T-cell (primary cell): ENCODE measurements at regions of chrX and their contacts with region 1.

Region 1: DNA sequence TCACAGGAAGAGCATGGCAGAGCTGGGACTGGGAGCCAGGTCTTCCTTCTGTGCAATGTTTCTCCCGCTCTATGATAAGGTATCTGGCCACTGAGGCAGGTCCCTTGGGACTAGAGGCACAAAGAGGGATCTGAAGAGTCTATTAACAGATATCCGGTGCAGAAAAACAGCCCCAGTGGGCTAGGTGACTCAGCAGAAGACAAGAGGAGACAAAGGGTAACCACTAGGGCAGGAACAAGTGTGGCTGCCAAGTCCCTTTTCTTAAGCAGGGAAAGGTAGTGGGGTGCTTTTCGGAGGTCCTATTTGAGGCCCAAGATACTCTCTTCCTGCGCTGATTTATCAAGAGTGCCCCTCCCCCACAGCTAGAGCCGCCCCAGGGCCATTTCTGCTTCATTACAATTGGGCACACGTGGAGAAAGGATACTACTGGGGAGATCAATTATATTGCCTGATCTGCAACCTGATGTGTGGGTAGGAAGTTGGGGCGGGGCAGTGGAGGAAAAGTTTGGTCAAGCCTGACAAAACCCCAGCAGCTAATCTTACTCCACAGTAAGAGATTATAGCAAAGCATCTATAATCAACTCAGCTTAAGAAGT is at the start of gene DGAT2L6:
- DNase-seq: no peak
- ATAC-seq: no peak
- H3K4me3 ChIP-seq: no peak within 1 kb of the TSS
- H3K4me3 Mint-ChIP-seq: no peak within 1 kb of the TSS
- H3K27ac ChIP-seq: no peak within 1 kb of the TSS
- H3K27ac Mint-ChIP-seq: no peak within 1 kb of the TSS
- H3K4me1 ChIP-seq: no peaks in the 10 kb centered on the region
- H3K4me1 Mint-ChIP-seq: no peaks in the 10 kb centered on the region
- H3K27me3 ChIP-seq: no peaks in the 10 kb centered on the region
- H3K27me3 Mint-ChIP-seq: peaks cover 0 to 9% of the 10 kb centered on the region in 2 donors
- total RNA-seq, gene DGAT2L6: not detected

Region 2: GRCh38 chrX:69412661-69413060 is 764.4 kb before region 1 on chrX:
- CTCF ChIA-PET with region 1: interaction called in 1 of 2 experiments, 18 read pairs
- POLR2A ChIA-PET with region 1: no interaction called
- DNase-seq: no peak
- ATAC-seq: no peak
- H3K4me3 ChIP-seq: no peak overlapping the region
- H3K4me3 Mint-ChIP-seq: no peak overlapping the region
- H3K27ac ChIP-seq: no peak overlapping the region
- H3K27ac Mint-ChIP-seq: no peak overlapping the region
- H3K4me1 ChIP-seq: no peaks in the 10 kb centered on the region
- H3K4me1 Mint-ChIP-seq: peaks cover 0 to 2% (median 0%) of the 10 kb centered on the region in 3 donors
- H3K27me3 ChIP-seq: no peaks in the 10 kb centered on the region
- H3K27me3 Mint-ChIP-seq: no peaks in the 10 kb centered on the region